MCF 10A (cell line): ENCODE measurements at regions of chr5 and their contacts with region 1.

Region 1: DNA sequence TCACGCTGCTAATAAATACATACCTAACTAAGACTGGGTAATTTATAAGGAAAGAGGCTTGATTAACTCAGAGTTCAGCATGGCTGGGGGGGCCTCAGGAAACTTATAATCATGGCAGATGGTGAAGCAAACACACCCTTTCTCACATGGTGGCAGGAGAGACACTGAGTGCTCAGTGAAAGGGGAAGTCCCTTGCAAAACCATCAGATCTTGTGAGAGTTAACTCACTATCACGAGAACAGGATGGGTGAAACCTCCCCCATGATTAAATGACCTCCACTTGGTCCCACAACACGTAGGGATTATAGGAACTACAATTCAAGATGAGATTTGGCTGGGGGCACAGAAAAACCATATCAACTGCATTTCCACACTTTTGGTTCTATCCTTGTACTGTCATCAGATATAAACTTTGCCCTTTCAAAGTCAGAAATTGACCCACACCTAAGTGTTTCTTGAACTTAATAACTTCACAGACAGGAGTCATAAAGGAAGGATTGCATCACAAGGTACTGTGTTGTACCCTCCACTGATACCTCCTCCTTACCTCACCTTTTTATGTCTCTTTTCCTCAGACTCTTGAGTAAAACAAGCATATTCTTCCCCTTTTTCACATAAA is 319.1 kb upstream of the PIK3R1 start:
- DNase-seq: peak; percentile 27
- H3K4me3 Mint-ChIP-seq: no peak overlapping the region
- H3K27ac Mint-ChIP-seq: peak overlapping the region; percentile 82
- H3K4me1 Mint-ChIP-seq: peaks cover 39% of the 10 kb centered on the region
- H3K27me3 Mint-ChIP-seq: no peaks in the 10 kb centered on the region
- CTCF ChIP-seq: no peak

Region 2: GRCh38 chr5:67686746-67687145 is 209.7 kb before region 1 on chr5:
- CTCF ChIA-PET with region 1: no interaction called
- POLR2A ChIA-PET with region 1: no interaction called
- intact Hi-C with region 1: no loop called
- DNase-seq: no peak
- H3K4me3 Mint-ChIP-seq: no peak overlapping the region
- H3K27ac Mint-ChIP-seq: no peak overlapping the region
- H3K4me1 Mint-ChIP-seq: no peaks in the 10 kb centered on the region
- H3K27me3 Mint-ChIP-seq: no peaks in the 10 kb centered on the region
- CTCF ChIP-seq: no peak

Region 3: GRCh38 chr5:67815455-67816391 is 80.7 kb before region 1 on chr5:
- CTCF ChIA-PET with region 1: interaction called, 5 read pairs
- POLR2A ChIA-PET with region 1: interaction called, 17 read pairs
- intact Hi-C with region 1: no loop called
- DNase-seq: peak; percentile 58
- H3K4me3 Mint-ChIP-seq: peak overlapping the region; percentile 26
- H3K27ac Mint-ChIP-seq: peak overlapping the region; percentile 82
- H3K4me1 Mint-ChIP-seq: peaks cover 26% of the 10 kb centered on the region
- H3K27me3 Mint-ChIP-seq: no peaks in the 10 kb centered on the region
- CTCF ChIP-seq: no peak

Region 4: GRCh38 chr5:67879620-67880510 is 16.6 kb before region 1 on chr5:
- CTCF ChIA-PET with region 1: no interaction called
- POLR2A ChIA-PET with region 1: interaction called, 54 read pairs
- intact Hi-C with region 1: no loop called
- DNase-seq: peak; percentile 62
- H3K4me3 Mint-ChIP-seq: no peak overlapping the region
- H3K27ac Mint-ChIP-seq: peak overlapping the region; percentile 74
- H3K4me1 Mint-ChIP-seq: peaks cover 42% of the 10 kb centered on the region
- H3K27me3 Mint-ChIP-seq: no peaks in the 10 kb centered on the region
- CTCF ChIP-seq: no peak

Region 5: DNA sequence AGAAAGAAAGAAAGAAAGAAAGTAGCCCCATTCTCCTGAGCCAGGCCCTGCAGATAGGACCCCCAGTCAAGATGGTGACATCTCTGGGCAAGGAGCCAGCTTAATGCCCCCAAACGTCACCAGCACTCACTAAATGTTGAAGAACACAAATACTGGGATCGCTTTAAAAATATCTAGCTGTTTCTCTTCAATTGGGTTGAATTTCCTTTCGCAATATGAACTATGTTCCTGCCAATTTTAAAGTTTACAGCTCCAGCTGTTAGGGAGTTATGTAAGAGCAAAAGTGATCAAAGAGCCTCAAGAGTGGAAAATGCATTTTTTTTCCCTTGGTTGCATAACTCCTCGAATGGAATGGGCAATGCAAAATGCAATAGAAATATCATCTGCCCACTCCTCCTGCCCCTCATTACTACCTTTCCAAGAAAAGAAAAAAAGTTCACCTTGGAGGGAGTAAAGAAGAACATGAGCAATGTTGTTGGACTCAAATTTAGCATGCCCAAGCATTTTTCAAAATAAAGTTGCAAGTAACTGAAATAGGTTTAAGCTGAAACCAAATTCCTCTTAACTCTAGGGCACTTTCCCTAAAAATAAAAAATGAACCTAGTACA is 74.9 kb after region 1 on chr5:
- CTCF ChIA-PET with region 1: no interaction called
- POLR2A ChIA-PET with region 1: interaction called, 23 read pairs
- intact Hi-C with region 1: no loop called
- DNase-seq: peak; percentile 87
- H3K4me3 Mint-ChIP-seq: no peak overlapping the region
- H3K27ac Mint-ChIP-seq: no peak overlapping the region
- H3K4me1 Mint-ChIP-seq: peaks cover 29% of the 10 kb centered on the region
- H3K27me3 Mint-ChIP-seq: no peaks in the 10 kb centered on the region
- CTCF ChIP-seq: no peak

Region 6: GRCh38 chr5:68225188-68225910 is 328.9 kb after region 1 on chr5:
- CTCF ChIA-PET with region 1: interaction called, 3 read pairs
- POLR2A ChIA-PET with region 1: interaction called, 106 read pairs
- intact Hi-C with region 1: no loop called
- DNase-seq: peak; percentile 98
- H3K4me3 Mint-ChIP-seq: peak overlapping the region; percentile 69
- H3K27ac Mint-ChIP-seq: peak overlapping the region; percentile 92
- H3K4me1 Mint-ChIP-seq: peaks cover 85% of the 10 kb centered on the region
- H3K27me3 Mint-ChIP-seq: no peaks in the 10 kb centered on the region
- CTCF ChIP-seq: no peak